AG04449 (cell line): ENCODE measurements at regions of chr16 and their contacts with region 1.

Region 1: DNA sequence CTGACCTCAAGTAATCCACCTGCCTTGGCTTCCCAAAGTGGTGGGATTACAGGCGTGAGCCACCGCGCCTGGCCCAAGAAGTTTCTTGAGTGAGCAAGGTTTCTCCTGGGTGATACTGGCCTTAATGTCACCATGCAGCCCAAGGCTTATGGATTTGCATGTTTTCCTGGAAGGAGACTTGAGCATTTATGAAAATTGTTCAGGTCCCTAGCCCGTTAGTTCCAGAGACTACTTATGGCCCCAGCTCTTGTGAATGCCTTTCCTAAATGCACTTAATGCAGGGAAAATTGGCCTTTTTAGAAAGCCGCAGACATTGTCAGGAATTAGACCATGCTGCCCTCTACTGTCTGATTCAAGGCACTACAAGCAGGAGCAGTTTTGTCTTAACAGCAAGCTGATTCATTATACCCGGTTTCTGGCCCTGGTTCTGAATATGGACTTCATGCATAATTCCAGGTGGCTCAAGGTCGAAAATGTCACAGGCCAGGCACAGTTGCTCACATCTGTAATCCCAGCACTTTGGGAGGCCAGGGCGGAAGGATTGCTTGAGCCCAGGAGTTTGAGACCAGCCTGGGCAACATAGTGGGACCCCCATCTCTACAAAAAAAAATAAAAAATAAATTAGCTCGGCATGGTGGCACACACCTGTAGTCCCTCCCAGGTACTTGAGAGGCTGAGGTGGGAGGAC is 91.3 kb downstream of the SNX29 start:
- DNase-seq: peak; percentile 46
- H3K4me3 ChIP-seq: no peak overlapping the region
- CTCF ChIP-seq: peak; percentile 81

Region 2: DNA sequence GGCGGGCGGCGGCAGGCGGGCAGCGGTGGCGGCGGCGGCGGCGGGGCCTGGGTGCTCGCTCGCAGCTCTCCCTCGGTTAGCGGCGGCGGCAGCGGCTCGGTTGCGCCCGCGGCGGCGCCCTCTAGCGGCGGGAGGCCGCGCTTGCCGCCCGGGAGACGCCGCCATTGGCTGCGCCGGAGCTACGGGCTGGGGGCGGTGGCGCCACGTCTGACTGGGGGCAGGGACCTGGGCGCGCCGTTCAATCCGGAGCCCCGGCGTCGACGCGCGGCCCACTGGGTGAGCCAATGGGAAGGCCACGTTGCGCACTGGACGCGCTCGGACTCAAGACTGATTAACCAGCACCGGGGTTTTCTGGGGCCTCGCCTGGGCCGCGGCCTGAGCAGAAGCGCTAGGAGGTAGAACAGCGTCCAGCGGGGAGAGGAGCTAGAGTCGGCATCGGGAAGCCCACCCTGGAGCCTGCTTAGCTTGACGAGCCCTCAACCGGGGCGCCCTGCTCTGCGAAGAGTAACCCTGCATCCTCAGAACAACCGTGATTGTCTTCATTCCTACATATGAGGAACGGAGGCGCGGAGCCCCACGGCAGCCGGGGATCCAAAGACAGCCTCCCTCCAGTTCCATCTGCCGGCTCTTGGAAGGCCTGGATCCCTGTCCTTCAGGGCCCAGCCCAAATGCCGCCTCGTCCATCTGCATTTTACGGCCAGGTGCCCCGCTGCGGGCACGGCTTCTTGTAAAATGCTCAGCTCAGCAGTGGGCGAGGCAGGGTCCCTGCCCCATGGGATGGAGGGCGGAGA is 270.5 kb before region 1 on chr16 and contains the start of gene ZC3H7A:
- CTCF ChIA-PET with region 1: interaction called, 11 read pairs
- POLR2A ChIA-PET with region 1: no interaction called
- DNase-seq: peak; percentile 78
- H3K4me3 ChIP-seq: peak within 1 kb of the TSS; percentile 83
- CTCF ChIP-seq: peak; percentile 65

Region 3: GRCh38 chr16:11884035-11884434 is 183.8 kb before region 1 on chr16:
- CTCF ChIA-PET with region 1: interaction called, 14 read pairs
- POLR2A ChIA-PET with region 1: no interaction called
- DNase-seq: no peak
- H3K4me3 ChIP-seq: no peak overlapping the region
- CTCF ChIP-seq: no peak

Region 4: DNA sequence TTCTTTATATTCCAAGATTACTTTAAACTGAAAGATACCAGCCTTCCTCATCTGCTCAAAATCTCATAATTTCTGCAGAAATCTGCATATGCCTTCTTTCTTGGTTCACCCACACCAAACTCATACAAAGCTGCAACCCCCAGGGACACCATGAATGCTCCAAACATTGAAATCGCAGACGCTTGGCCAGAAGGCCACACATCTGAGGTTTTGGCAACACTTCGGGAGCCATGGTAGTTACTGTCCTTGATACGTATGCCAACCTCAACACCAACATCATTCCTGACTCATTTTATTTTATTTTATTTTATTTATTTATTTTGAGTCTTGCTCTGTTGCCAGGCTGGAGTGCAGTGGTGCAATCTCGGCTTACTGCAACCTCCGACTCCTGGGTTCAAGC is 164.0 kb before region 1 on chr16:
- CTCF ChIA-PET with region 1: interaction called, 13 read pairs
- POLR2A ChIA-PET with region 1: no interaction called
- DNase-seq: no peak
- H3K4me3 ChIP-seq: no peak overlapping the region
- CTCF ChIP-seq: no peak

Region 5: GRCh38 chr16:11949527-11949926 is 118.3 kb before region 1 on chr16:
- CTCF ChIA-PET with region 1: interaction called, 82 read pairs
- POLR2A ChIA-PET with region 1: no interaction called
- DNase-seq: no peak
- H3K4me3 ChIP-seq: no peak overlapping the region
- CTCF ChIP-seq: peak; percentile 40

Region 6: GRCh38 chr16:11963706-11964105 is 104.2 kb before region 1 on chr16:
- CTCF ChIA-PET with region 1: interaction called, 13 read pairs
- POLR2A ChIA-PET with region 1: no interaction called
- DNase-seq: no peak
- H3K4me3 ChIP-seq: no peak overlapping the region
- CTCF ChIP-seq: no peak

Region 7: DNA sequence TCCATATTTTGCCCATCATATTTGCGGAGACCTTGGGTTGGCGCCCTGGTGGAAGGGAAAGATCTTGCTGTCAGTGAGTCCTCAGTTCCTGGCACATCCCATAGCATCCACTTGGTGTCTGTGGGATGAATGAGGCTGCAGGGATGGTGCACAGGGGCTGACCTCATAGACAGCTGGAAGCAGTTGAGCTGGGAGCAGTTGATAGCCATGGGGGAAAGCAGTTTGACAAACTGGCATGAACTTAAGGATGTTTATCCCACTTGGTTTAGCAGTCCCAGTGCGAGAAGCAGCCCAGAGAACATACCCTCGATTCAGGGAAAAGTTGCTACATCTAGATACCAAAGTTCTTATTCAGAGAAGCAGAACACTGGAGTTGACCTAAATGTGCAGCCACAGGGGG is 10.6 kb before region 1 on chr16:
- CTCF ChIA-PET with region 1: interaction called, 17 read pairs
- POLR2A ChIA-PET with region 1: no interaction called
- DNase-seq: no peak
- H3K4me3 ChIP-seq: no peak overlapping the region
- CTCF ChIP-seq: no peak